Kidney (tissue), 22 donors: ENCODE measurements at regions of chr9 and their contacts with region 1.

Region 1: DNA sequence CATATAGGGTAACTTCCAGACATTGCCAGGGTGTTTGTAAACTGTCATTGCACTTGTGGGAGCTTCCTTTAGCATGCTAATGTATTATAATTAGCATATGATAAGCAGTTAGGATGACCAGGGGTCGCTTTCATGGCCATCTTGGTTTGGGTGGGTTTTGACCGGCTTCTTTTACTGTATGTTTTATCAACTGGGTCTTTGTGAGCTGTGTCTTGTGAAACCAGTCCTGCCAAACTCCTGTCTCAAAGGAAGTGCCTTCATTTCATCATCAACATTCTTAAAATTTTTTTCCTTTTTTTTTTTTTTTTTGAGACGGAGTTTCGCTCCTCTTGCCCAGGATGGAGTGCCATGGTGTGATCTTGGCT is 11.9 kb upstream of the MELK start:
- DNase-seq: no peak
- H3K4me3 ChIP-seq: no peak overlapping the region
- H3K27ac ChIP-seq: no peak overlapping the region
- H3K4me1 ChIP-seq: no peaks in the 10 kb centered on the region
- H3K27me3 ChIP-seq: no peaks in the 10 kb centered on the region
- CTCF ChIP-seq: no peak

Region 2: DNA sequence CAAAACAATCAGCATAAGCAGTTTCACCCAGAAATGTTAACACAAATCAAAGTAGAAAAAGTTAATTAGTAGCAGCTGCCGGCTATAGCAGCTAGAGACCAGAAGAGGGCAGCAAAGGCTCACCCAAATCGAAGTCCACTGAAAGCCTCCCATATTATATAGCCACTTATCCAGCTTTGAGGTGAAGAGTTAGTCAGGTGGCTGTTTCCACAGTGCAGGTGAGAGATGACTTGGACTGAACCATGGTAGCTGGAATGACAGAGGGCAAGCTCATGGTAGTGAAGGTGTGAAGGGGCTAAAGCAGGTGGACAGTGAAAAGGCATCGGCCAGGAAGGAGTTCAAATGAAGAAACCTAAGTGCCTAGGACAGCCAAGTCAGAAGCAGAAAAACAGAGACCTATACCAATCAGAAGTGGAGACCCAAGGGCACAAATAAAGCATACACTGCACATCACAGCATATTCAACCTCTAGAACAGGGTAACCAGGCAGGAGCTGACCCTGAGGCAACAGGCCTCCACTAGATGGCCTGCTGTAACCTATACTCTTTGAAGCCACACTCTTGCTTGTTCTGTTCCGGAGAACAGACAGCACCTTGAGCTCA is 153.6 kb before region 1 on chr9:
- intact Hi-C with region 1: loop called (anchors 5 kb)
- DNase-seq: peak in 4 of 5 donors; percentile 72 to 86 (median 74)
- H3K4me3 ChIP-seq: no peak overlapping the region
- H3K27ac ChIP-seq: peak overlapping the region in 1 of 2 donors; percentile 29
- H3K4me1 ChIP-seq: peaks cover 0 to 19% (median 4%) of the 10 kb centered on the region in 3 donors
- H3K27me3 ChIP-seq: no peaks in the 10 kb centered on the region
- CTCF ChIP-seq: peak; percentile 95